Activated CD4-positive, alpha-beta memory T cell treated with anti-CD3 and anti-CD28 coated beads for 36 hours (primary cell): ENCODE measurements at regions of chr10 and their contacts with region 1.

Region 1: GRCh38 chr10:102151774-102152544 is at the start of gene NOLC1:
- DNase-seq: peak; percentile 100
- H3K4me3 Mint-ChIP-seq: peak within 1 kb of the TSS; percentile 96
- H3K27ac Mint-ChIP-seq: peak within 1 kb of the TSS; percentile 98
- H3K4me1 Mint-ChIP-seq: peaks cover 53% of the 10 kb centered on the region
- H3K27me3 Mint-ChIP-seq: no peaks in the 10 kb centered on the region
- total RNA-seq, gene NOLC1: 165 to 168 TPM

Region 2: DNA sequence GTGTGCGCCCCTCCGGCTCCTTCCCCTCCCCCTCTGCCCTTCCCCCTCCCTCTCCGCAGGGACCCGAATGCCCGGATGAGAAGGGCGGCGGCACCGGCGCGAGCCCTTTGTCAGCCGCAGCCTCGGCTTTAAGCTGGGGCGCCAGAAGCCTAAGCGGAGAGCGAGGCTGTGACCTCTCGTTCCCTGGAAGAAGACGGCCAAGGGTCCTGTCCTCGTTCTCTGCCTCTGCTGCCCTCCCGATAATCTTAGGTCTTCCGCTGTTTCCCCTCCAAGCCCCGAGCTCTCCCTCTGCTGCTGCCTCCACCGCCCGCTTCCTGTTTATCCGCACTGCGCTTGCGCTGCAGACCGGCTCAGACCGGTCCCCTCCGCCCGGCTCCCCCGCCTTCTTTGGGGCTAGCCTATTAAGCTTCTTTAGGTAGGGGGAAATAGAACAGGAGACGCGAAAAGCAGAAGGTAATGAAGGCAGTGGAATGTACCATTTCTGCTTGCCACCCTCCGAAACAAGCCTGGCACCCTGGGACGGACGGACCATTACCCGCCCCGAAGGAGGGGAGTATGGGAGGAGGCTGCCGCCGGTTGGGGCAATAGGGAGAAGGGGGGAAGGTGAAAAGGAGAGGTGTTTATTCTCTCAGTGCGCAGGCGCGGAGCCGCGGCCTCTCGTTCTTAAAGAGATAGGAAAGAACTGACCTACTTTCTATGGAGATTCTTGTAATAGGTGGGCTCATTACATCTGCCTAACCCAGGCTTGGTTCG is 333.7 kb before region 1 on chr10 and contains the start of gene OGA:
- CTCF ChIA-PET with region 1: no interaction called
- POLR2A ChIA-PET with region 1: interaction called, 9 read pairs
- intact Hi-C with region 1: loop called (anchors 2 kb)
- DNase-seq: peak; percentile 99
- H3K4me3 Mint-ChIP-seq: peak within 1 kb of the TSS; percentile 97
- H3K27ac Mint-ChIP-seq: peak within 1 kb of the TSS; percentile 97
- H3K4me1 Mint-ChIP-seq: peaks cover 39% of the 10 kb centered on the region
- H3K27me3 Mint-ChIP-seq: no peaks in the 10 kb centered on the region
- total RNA-seq, gene OGA: 93.2 to 105 TPM

Region 3: DNA sequence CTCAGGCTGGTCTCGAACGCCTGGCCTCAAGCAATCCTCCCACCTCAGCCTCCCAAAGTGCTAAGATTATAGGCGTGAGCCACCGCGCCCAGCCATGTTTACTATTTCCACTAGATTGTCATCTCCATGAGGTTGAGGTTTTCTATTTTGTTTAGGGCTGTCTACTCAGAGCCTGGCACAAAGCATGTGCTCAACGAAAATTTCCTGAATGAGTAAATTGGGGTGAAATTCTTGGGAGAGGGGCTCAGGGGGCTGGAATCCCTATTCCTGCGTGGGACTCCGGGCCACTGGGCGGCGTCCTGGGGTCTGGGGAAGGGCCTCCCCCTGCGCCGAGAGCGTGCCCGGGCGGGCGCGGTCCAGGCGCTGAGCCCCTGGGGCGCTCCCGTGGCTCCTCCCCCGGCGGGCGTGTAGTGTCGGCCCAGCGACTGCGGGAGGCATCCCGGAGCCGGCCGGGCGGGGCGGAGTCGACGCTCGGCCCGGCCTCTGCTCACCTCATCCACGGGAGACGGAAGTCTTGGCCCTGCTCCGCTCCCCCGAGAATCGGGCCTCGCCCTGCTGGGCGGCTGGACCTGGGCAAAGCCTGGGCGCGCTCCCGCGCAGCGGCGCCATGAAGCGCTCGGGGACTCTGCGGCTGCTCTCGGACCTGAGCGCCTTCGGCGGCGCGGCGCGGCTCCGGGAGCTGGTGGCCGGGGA is 86.9 kb before region 1 on chr10 and contains the start of gene HPS6:
- CTCF ChIA-PET with region 1: no interaction called
- POLR2A ChIA-PET with region 1: no interaction called
- intact Hi-C with region 1: loop called (anchors 2 kb)
- DNase-seq: peak; percentile 93
- H3K4me3 Mint-ChIP-seq: peak within 1 kb of the TSS; percentile 86
- H3K27ac Mint-ChIP-seq: peak within 1 kb of the TSS; percentile 81
- H3K4me1 Mint-ChIP-seq: peaks cover 26% of the 10 kb centered on the region
- H3K27me3 Mint-ChIP-seq: no peaks in the 10 kb centered on the region
- total RNA-seq, gene HPS6: 22.3 TPM

Region 4: DNA sequence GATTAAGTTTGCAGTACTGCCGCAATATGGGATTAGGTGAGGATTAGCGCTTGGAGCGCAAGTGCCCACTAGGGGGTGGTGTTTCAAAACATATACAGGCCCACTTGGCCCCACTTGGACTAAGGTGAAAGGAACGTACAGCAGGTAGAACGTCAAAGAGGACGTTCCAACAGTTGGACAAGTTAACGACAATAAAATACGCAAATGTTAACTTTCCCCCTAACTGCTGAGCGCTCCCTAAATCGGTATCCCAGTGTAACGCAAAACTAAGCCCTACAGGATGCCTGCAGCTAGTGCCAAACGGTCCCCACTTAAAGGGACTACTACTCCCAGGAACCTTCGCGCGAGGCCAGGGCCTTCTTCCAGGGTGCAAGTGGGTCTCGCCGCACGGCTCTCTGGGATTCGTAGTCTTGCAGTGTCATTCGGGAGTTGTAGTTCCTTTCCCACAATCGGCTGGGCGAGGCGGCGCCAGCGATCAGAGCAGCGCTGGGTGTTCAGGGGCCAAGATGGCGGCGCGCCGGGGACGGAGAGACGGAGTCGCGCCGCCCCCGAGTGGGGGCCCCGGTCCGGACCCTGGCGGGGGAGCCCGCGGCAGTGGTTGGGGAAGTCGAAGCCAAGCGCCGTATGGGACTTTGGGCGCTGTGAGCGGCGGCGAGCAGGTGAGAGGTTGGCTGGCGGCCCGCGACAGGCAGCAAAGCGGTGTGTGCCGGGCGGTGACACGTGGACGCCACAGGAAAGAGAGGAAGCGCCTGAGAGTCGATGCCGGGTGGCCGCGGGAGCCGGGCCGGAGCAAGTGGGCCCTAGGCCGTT is 19.2 kb before region 1 on chr10 and contains the start of gene PPRC1:
- CTCF ChIA-PET with region 1: interaction called, 8 read pairs
- POLR2A ChIA-PET with region 1: interaction called, 14 read pairs
- intact Hi-C with region 1: loop called (anchors 1 kb)
- DNase-seq: peak; percentile 99
- H3K4me3 Mint-ChIP-seq: peak within 1 kb of the TSS; percentile 100
- H3K27ac Mint-ChIP-seq: peak within 1 kb of the TSS; percentile 98
- H3K4me1 Mint-ChIP-seq: peaks cover 42% of the 10 kb centered on the region
- H3K27me3 Mint-ChIP-seq: no peaks in the 10 kb centered on the region
- total RNA-seq, gene PPRC1: 59.1 to 65.9 TPM

Region 5: DNA sequence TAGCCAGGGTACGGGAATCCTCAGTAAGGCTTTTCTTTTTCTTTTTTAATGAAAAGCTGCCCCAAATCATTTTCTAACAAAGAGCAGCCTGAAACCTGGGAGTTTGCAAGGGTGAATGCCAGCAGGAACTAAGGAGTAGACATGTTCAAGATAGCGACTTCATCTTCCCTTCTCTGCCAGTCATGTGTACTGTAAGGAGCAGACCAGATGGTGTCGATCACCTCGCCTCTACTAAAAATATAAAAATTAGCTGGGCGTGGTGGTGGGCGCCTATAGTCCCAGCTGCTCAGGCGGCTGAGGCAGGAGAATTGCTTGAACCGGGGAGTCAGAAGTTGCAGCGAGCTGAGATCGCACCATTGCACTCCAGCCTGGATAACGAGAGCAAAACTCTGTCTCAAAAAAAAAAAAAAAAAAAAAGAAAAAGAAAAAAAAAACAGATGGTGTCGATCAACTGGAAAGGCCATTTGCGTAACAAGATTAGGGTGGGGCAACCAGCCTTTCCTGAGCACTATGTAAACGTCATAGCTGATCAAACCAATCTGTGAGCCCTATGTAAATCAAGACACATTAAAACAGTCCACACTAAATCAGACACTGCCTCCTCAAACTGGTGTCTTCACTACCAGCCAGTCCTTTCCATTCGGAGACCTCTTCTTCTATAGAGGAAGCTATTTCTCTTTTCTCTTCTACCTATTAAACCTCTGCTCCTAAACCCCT is 34.0 kb after region 1 on chr10:
- CTCF ChIA-PET with region 1: interaction called, 3 read pairs
- POLR2A ChIA-PET with region 1: no interaction called
- intact Hi-C with region 1: loop called (anchors 1 kb)
- DNase-seq: no peak
- H3K4me3 Mint-ChIP-seq: no peak overlapping the region
- H3K27ac Mint-ChIP-seq: no peak overlapping the region
- H3K4me1 Mint-ChIP-seq: peaks cover 14% of the 10 kb centered on the region
- H3K27me3 Mint-ChIP-seq: no peaks in the 10 kb centered on the region

Region 6: GRCh38 chr10:102420810-102421644 is 269.1 kb after region 1 on chr10 and contains the start of gene FBXL15:
- CTCF ChIA-PET with region 1: no interaction called
- POLR2A ChIA-PET with region 1: no interaction called
- intact Hi-C with region 1: loop called (anchors 5 kb)
- DNase-seq: peak; percentile 98
- H3K4me3 Mint-ChIP-seq: peak within 1 kb of the TSS; percentile 94
- H3K27ac Mint-ChIP-seq: peak within 1 kb of the TSS; percentile 92
- H3K4me1 Mint-ChIP-seq: peaks cover 35% of the 10 kb centered on the region
- H3K27me3 Mint-ChIP-seq: peaks cover 20% of the 10 kb centered on the region
- total RNA-seq, gene FBXL15: 10.8 to 11.4 TPM

Region 7: GRCh38 chr10:102444851-102445250 is 292.9 kb after region 1 on chr10:
- CTCF ChIA-PET with region 1: no interaction called
- POLR2A ChIA-PET with region 1: no interaction called
- intact Hi-C with region 1: no loop called
- DNase-seq: no peak
- H3K4me3 Mint-ChIP-seq: no peak overlapping the region
- H3K27ac Mint-ChIP-seq: no peak overlapping the region
- H3K4me1 Mint-ChIP-seq: peaks cover 9% of the 10 kb centered on the region
- H3K27me3 Mint-ChIP-seq: no peaks in the 10 kb centered on the region

Region 8: DNA sequence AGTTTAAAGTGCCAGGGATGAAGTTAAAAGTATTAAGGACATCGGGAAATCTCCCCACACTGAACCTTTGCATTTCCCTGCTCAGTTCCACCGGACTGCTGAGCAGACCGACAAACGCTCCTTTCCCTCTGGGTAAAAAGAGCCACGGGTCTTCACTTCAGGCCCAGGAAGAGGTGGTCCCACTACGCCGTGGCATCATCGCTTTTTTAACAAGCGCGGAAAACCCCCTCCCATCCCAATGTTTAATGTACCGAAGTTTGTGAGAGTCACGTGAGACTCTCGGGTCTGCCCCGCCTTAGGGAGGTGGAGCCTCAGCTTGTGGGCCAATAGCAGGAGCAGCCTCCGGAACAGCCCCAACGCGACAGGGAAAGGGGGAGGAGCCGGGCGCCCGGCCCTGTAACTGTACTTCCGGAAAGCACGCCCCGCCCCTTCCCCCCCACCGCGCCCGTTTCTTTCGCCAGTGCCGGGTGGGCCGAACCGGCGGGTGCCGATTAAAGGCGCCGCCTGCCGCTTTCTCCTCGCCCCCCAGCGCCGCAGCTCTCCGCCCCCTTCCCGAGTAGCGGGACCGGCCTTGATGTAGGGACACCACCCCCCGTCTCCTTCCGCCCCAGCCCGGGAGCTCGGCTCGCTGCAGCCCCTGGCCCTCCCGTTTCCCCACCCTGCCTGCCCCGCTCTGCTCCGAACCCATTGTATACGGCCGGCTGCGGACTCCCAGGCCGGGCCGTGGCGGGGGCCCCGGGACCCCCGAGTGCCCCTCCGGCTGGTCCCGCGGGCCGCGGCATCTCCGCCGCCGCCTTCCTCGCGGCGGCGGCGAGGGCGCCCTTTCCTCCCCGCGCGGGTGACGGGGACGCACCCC is 490.1 kb after region 1 on chr10:
- CTCF ChIA-PET with region 1: no interaction called
- POLR2A ChIA-PET with region 1: no interaction called
- intact Hi-C with region 1: loop called (anchors 2 kb)
- DNase-seq: peak; percentile 99
- H3K4me3 Mint-ChIP-seq: peak overlapping the region; percentile 87
- H3K27ac Mint-ChIP-seq: peak overlapping the region; percentile 95
- H3K4me1 Mint-ChIP-seq: peaks cover 17% of the 10 kb centered on the region
- H3K27me3 Mint-ChIP-seq: no peaks in the 10 kb centered on the region